CD4-positive, alpha-beta T cell (primary cell): ENCODE measurements at regions of chr3 and their contacts with region 1.

Region 1: GRCh38 chr3:119098619-119099222 is 47.2 kb upstream of the TEX55 start:
- DNase-seq: peak in 4 of 14 experiments; percentile 14 to 67 (median 62)
- ATAC-seq: no peak
- H3K4me3 ChIP-seq: no peak overlapping the region
- H3K4me3 Mint-ChIP-seq: no peak overlapping the region
- H3K27ac ChIP-seq: no peak overlapping the region
- H3K27ac Mint-ChIP-seq: no peak overlapping the region
- H3K4me1 ChIP-seq: no peaks in the 10 kb centered on the region
- H3K4me1 Mint-ChIP-seq: no peaks in the 10 kb centered on the region
- H3K27me3 ChIP-seq: no peaks in the 10 kb centered on the region
- H3K27me3 Mint-ChIP-seq: no peaks in the 10 kb centered on the region
- CTCF ChIP-seq: peak; percentile 90

Region 2: GRCh38 chr3:119034256-119035013 is 64.3 kb before region 1 on chr3 and contains the start of gene IGSF11:
- CTCF ChIA-PET with region 1: interaction called, 10 read pairs
- POLR2A ChIA-PET with region 1: no interaction called
- intact Hi-C with region 1: loop called (anchors 2 kb)
- DNase-seq: peak; percentile 42 to 81 (median 60)
- ATAC-seq: peak; percentile 92
- H3K4me3 ChIP-seq: peak within 1 kb of the TSS; percentile 64
- H3K4me3 Mint-ChIP-seq: peak within 1 kb of the TSS; percentile 91
- H3K27ac ChIP-seq: no peak within 1 kb of the TSS
- H3K27ac Mint-ChIP-seq: no peak within 1 kb of the TSS
- H3K4me1 ChIP-seq: peaks cover 11% of the 10 kb centered on the region
- H3K4me1 Mint-ChIP-seq: peaks cover 5% of the 10 kb centered on the region
- H3K27me3 ChIP-seq: peaks cover 9 to 27% of the 10 kb centered on the region in 2 experiments
- H3K27me3 Mint-ChIP-seq: peaks cover 49% of the 10 kb centered on the region
- CTCF ChIP-seq: peak; percentile 47
- total RNA-seq, gene IGSF11: 0.53 to 0.58 TPM

Region 3: DNA sequence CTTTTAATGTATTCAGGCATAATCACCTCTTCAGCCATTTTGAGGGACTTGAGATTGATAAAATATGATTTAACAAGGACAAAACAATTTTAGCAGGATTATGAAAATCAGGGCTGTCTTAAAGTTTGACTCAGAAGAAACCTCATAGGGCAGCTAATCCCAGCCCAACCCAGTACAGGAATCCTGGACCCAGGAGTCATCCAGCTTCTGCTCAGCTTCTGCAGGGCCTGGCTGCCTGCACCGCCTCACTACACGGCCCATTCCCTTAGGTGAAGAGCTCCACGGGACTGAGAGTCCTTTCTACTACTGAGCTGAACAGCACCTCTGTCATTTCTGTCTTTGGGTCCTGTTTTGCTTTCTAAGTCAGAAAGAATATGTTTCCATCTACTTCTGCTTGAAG is 232.9 kb after region 1 on chr3:
- CTCF ChIA-PET with region 1: no interaction called
- POLR2A ChIA-PET with region 1: no interaction called
- intact Hi-C with region 1: no loop called
- DNase-seq: no peak
- ATAC-seq: no peak
- H3K4me3 ChIP-seq: no peak overlapping the region
- H3K4me3 Mint-ChIP-seq: no peak overlapping the region
- H3K27ac ChIP-seq: no peak overlapping the region
- H3K27ac Mint-ChIP-seq: no peak overlapping the region
- H3K4me1 ChIP-seq: no peaks in the 10 kb centered on the region
- H3K4me1 Mint-ChIP-seq: no peaks in the 10 kb centered on the region
- H3K27me3 ChIP-seq: no peaks in the 10 kb centered on the region
- H3K27me3 Mint-ChIP-seq: no peaks in the 10 kb centered on the region
- CTCF ChIP-seq: no peak